ENCODE measurements at regions of chr1 and their contacts with region 1.

Region 1: DNA sequence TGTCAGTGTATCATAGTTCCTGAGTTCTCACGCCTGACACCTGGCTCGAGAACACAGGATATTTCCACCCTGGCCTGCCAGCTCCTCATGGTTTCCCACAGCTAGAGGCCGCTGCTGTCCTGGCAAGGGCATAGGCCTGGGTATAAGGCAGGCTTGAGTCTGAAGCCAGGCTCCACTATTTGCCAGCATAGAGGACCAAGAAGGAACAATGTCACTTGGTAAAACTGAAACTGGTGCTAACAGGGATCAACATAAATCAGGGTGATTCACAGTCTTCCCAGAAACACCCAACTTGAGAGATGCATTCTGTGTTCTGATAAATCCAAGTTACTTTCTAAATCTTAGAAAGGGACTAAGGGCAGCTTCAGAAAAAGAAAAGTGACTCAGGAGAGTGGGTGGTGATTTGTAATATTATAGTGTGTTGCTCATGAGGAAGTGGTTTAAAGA is 6.9 kb upstream of the S100A2 start:
- DNase-seq: peak; percentile 93
- H3K4me3 ChIP-seq: no peak overlapping the region
- H3K27ac ChIP-seq: no peak overlapping the region
- H3K4me1 ChIP-seq: peaks cover 15% of the 10 kb centered on the region
- H3K27me3 ChIP-seq: no peaks in the 10 kb centered on the region
- CTCF ChIP-seq: peak; percentile 89 to 96
- POLR2A ChIP-seq: no peak

Region 2: DNA sequence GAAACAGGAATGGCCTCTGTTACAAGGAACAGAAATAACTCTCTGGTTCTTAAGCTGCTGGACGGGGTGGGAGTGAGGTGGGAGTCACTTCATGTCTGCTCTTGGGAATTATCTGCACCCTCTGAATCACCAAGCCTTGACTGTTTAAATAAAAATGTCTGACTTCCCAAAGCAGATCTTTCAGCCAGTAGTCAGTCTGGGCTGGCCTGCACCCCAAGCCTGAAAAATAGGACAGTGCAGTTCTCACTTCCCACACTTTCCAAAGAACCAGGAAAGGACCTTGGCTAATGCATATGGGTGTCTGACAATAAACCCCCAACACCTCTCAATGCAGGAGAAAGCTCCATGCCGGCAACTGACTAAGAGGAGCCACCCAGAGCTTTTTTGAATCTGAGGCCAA is 112.9 kb before region 1 on chr1:
- CTCF ChIA-PET with region 1: no interaction called
- POLR2A ChIA-PET with region 1: no interaction called
- dilution Hi-C with region 1: no loop called
- intact Hi-C with region 1: no loop called
- DNase-seq: no peak
- H3K4me3 ChIP-seq: no peak overlapping the region
- H3K27ac ChIP-seq: no peak overlapping the region
- H3K4me1 ChIP-seq: no peaks in the 10 kb centered on the region
- H3K27me3 ChIP-seq: peaks cover 0 to 2% of the 10 kb centered on the region in 2 experiments
- CTCF ChIP-seq: no peak
- POLR2A ChIP-seq: no peak

Region 3: GRCh38 chr1:153510984-153511410 is 61.6 kb before region 1 on chr1:
- CTCF ChIA-PET with region 1: interaction called, 167 read pairs
- POLR2A ChIA-PET with region 1: no interaction called
- dilution Hi-C with region 1: no loop called
- intact Hi-C with region 1: loop called (anchors 1 kb)
- DNase-seq: peak; percentile 71
- H3K4me3 ChIP-seq: no peak overlapping the region
- H3K27ac ChIP-seq: no peak overlapping the region
- H3K4me1 ChIP-seq: no peaks in the 10 kb centered on the region
- H3K27me3 ChIP-seq: no peaks in the 10 kb centered on the region
- CTCF ChIP-seq: peak; percentile 94
- POLR2A ChIP-seq: no peak

Region 4: DNA sequence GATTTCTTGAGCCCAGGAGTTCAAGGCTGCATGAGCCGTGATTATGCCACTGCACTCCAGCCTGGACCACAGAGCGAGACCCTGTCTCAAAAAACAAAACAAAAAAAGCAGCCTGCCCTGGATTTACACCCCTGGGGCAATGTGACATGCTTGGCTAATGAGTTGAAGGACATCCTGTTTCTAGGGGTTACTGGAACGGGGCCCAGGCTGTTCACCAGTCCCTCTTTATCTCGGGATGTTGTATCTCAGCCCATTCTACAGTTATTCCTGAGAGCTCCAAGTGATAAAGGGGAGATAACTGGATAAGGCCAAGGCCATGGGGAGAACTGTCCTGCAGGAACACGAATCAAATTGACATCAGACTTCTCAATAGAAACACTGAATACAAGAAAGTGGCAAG is 14.7 kb after region 1 on chr1:
- CTCF ChIA-PET with region 1: interaction called, 24 read pairs
- POLR2A ChIA-PET with region 1: no interaction called
- dilution Hi-C with region 1: no loop called
- intact Hi-C with region 1: no loop called
- DNase-seq: no peak
- H3K4me3 ChIP-seq: no peak overlapping the region
- H3K27ac ChIP-seq: no peak overlapping the region
- H3K4me1 ChIP-seq: peaks cover 5% of the 10 kb centered on the region
- H3K27me3 ChIP-seq: no peaks in the 10 kb centered on the region
- CTCF ChIP-seq: no peak
- POLR2A ChIP-seq: no peak

Region 5: DNA sequence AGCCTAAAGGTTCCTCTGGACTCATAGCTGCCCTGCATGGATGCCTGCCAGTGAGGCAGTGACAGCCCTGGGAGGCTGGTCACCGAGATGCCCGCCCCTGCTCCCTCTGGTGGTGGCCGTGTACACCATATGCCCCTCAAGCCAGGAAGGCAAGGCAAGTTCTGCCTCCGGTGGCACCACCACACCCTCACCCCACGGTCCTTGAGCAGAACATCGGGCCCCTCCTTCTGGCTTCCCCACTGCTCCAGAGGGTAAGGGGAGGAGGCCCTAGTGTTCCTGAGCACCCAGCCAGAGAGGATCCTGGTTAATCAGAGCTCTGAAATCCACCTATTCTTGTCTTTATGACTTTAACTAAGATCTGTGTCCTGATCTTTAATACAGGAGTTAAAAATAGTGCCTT is 45.1 kb after region 1 on chr1:
- CTCF ChIA-PET with region 1: interaction called, 121 read pairs
- POLR2A ChIA-PET with region 1: interaction called, 3 read pairs
- dilution Hi-C with region 1: no loop called
- intact Hi-C with region 1: no loop called
- DNase-seq: peak; percentile 57
- H3K4me3 ChIP-seq: no peak overlapping the region
- H3K27ac ChIP-seq: no peak overlapping the region
- H3K4me1 ChIP-seq: no peaks in the 10 kb centered on the region
- H3K27me3 ChIP-seq: no peaks in the 10 kb centered on the region
- CTCF ChIP-seq: peak; percentile 65 to 75
- POLR2A ChIP-seq: peak; percentile 55

Region 6: DNA sequence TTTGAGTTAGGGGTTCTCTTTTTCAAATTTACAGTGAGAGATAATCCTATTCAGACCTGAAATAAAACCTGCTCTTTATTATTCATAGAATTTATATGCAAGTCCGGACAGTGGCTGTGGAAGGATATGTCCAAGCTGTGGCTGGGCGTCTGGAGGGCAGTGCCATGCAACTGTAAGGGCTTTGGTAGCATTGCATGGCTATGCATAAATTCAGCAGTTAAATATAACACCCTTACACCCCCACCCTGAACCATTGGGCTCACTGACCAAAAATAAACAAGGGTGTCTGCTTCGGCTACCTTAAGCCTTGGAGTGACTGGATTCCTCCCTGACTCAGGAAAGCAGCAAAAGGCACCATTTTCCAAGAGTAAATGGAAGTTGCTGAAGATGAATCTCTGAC is 66.7 kb after region 1 on chr1:
- CTCF ChIA-PET with region 1: interaction called, 29 read pairs
- POLR2A ChIA-PET with region 1: interaction called, 6 read pairs
- dilution Hi-C with region 1: no loop called
- intact Hi-C with region 1: loop called (anchors 1 kb)
- DNase-seq: no peak
- H3K4me3 ChIP-seq: no peak overlapping the region
- H3K27ac ChIP-seq: no peak overlapping the region
- H3K4me1 ChIP-seq: peaks cover 6% of the 10 kb centered on the region
- H3K27me3 ChIP-seq: no peaks in the 10 kb centered on the region
- CTCF ChIP-seq: no peak
- POLR2A ChIP-seq: no peak

Region 7: DNA sequence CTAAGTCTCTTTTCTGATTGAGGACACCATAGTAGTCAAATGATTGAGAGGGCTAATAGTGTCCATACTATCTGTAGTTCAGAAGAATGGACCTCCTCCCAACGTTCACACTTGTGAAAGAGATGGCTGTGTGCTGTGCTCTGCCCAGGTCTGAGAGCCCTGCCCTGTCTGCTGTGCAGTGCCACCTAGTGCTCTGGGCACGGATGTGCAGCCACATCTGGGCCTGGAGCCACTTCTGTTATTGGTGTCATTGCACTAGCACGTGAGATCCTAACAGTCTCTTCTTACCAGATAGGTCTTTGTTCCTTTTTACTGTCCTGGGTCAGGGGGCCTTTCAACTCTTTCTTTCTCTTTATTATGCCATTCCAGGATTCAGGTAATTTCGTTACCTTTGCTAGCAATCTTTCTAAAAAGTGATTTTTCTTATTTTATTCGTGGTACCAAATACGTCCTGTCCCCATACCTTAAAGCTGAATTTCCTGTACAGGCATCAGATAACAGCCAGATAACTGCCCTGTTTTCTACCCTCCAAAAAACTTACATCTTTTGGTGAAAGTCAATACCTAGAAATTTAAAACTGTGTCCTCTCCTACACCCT is 176.9 kb after region 1 on chr1:
- CTCF ChIA-PET with region 1: interaction called, 6 read pairs
- POLR2A ChIA-PET with region 1: no interaction called
- dilution Hi-C with region 1: no loop called
- intact Hi-C with region 1: loop called (anchors 1 kb)
- DNase-seq: peak; percentile 88
- H3K4me3 ChIP-seq: no peak overlapping the region
- H3K27ac ChIP-seq: peak overlapping the region; percentile 36
- H3K4me1 ChIP-seq: peaks cover 37% of the 10 kb centered on the region
- H3K27me3 ChIP-seq: no peaks in the 10 kb centered on the region
- CTCF ChIP-seq: peak; percentile 94 to 96
- POLR2A ChIP-seq: no peak

Measured in endothelial cell of umbilical vein (primary cell).